B cell (primary cell): ENCODE measurements at regions of chr7 and their contacts with region 1.

Region 1: DNA sequence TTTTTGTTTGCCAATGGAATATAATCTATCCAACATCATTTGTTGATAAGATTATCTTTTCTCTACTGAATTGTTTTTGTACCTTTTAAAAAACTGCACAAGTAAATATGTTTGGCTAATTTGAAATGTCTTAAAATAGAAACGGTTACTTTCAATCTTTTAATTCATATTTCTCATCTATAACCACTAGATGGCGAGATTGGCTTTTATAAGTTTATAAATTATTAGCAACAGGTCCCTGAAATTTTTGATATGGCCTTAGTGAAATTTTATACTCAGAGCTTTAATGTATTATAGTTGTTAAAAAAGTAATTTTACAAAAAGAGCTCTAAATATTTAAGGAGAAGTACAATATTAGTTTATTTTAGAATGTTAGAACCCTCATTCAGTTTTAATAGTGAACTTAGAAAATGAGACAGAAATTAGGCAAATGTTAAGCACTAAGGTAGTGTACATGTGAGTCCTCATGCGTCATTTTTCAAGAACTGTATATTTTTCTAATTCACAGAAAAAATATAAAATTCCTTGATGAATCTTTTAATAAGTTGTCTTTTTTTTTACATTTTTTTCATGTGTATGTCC is 592.5 kb downstream of the ARL4A start:
- DNase-seq: peak; percentile 23
- ATAC-seq: no peak
- H3K4me3 ChIP-seq: no peak overlapping the region
- H3K4me3 Mint-ChIP-seq: no peak overlapping the region
- H3K27ac ChIP-seq: no peak overlapping the region
- H3K27ac Mint-ChIP-seq: no peak overlapping the region
- H3K4me1 ChIP-seq: no peaks in the 10 kb centered on the region
- H3K4me1 Mint-ChIP-seq: no peaks in the 10 kb centered on the region
- H3K27me3 ChIP-seq: no peaks in the 10 kb centered on the region
- H3K27me3 Mint-ChIP-seq: no peaks in the 10 kb centered on the region
- CTCF ChIP-seq: peak; percentile 76

Region 2: GRCh38 chr7:13240349-13240748 is 39.6 kb before region 1 on chr7:
- CTCF ChIA-PET with region 1: no interaction called
- POLR2A ChIA-PET with region 1: no interaction called
- intact Hi-C with region 1: no loop called
- DNase-seq: no peak
- ATAC-seq: no peak
- H3K4me3 ChIP-seq: no peak overlapping the region
- H3K4me3 Mint-ChIP-seq: no peak overlapping the region
- H3K27ac ChIP-seq: no peak overlapping the region
- H3K27ac Mint-ChIP-seq: no peak overlapping the region
- H3K4me1 ChIP-seq: no peaks in the 10 kb centered on the region
- H3K4me1 Mint-ChIP-seq: no peaks in the 10 kb centered on the region
- H3K27me3 ChIP-seq: no peaks in the 10 kb centered on the region
- H3K27me3 Mint-ChIP-seq: no peaks in the 10 kb centered on the region
- CTCF ChIP-seq: no peak

Region 3: DNA sequence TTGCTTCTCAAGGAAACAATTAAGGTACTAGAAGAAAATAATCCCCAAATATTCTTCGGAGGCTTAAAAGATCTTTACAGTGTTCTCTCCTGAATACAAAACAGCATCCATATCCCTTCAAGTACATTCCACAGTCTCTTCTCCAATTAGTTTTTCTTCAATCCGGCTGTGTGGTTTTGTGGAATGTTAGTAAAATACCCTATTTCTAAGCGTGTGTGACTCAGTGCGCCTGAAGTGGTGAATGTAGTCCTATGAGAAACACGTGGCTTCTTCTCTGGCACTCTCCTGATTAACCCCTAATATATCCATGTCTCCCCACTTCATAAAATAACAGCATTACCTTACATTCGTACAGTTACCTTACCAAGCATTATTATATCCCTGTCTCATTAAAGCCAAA is 22.3 kb before region 1 on chr7:
- CTCF ChIA-PET with region 1: no interaction called
- POLR2A ChIA-PET with region 1: no interaction called
- intact Hi-C with region 1: no loop called
- DNase-seq: no peak
- ATAC-seq: no peak
- H3K4me3 ChIP-seq: no peak overlapping the region
- H3K4me3 Mint-ChIP-seq: no peak overlapping the region
- H3K27ac ChIP-seq: no peak overlapping the region
- H3K27ac Mint-ChIP-seq: no peak overlapping the region
- H3K4me1 ChIP-seq: no peaks in the 10 kb centered on the region
- H3K4me1 Mint-ChIP-seq: no peaks in the 10 kb centered on the region
- H3K27me3 ChIP-seq: peaks cover 0 to 3% (median 0%) of the 10 kb centered on the region in 4 experiments
- H3K27me3 Mint-ChIP-seq: no peaks in the 10 kb centered on the region
- CTCF ChIP-seq: no peak

Region 4: GRCh38 chr7:14691597-14692203 is 1411.8 kb after region 1 on chr7:
- CTCF ChIA-PET with region 1: interaction called, 20 read pairs
- POLR2A ChIA-PET with region 1: no interaction called
- intact Hi-C with region 1: no loop called
- DNase-seq: peak; percentile 44
- ATAC-seq: peak; percentile 53
- H3K4me3 ChIP-seq: no peak overlapping the region
- H3K4me3 Mint-ChIP-seq: no peak overlapping the region
- H3K27ac ChIP-seq: no peak overlapping the region
- H3K27ac Mint-ChIP-seq: no peak overlapping the region
- H3K4me1 ChIP-seq: no peaks in the 10 kb centered on the region
- H3K4me1 Mint-ChIP-seq: peaks cover 2% of the 10 kb centered on the region
- H3K27me3 ChIP-seq: no peaks in the 10 kb centered on the region
- H3K27me3 Mint-ChIP-seq: no peaks in the 10 kb centered on the region
- CTCF ChIP-seq: peak; percentile 96